HEK293 (cell line): ENCODE measurements at regions of chr15 and their contacts with region 1.

Region 1: DNA sequence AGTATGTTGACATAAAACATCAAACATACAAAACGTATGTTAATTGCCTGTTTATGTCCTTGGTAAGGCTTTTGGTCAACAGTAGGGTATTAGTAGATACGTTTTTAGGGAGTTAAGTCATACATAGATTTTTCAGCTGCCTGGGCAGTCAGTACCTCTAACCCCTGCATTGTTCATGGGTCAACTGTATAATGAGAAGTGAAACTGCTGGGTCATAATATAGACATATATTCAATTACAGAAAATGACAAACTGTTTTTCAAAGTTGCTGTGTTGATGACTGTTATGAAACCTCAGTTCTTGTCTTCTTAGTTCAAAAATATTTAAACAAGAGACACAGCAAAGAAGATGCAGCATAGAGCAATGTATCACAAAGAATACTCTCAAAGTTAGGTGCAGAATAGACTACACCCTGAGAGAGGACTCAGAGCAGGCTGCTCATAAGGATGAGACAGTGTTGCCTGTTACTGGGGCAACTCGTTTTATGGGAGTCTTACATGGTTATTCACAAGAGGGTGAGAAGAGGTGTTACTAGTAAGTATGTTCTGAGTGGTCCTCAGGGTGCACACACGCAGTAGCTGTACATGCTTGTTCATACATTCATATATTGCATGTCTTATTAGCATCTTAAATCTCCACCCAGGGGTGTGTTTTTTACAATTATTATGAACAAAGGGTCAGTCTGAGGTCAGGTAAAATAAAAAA is 53.1 kb upstream of the ADAMTS17 start:
- H3K4me3 ChIP-seq: no peak overlapping the region
- H3K27ac ChIP-seq: no peak overlapping the region
- H3K4me1 ChIP-seq: no peaks in the 10 kb centered on the region
- CTCF ChIP-seq: no peak

Region 2: GRCh38 chr15:100429116-100429728 is 34.3 kb after region 1 on chr15:
- CTCF ChIA-PET with region 1: no interaction called
- POLR2A ChIA-PET with region 1: interaction called, 11 read pairs
- H3K4me3 ChIP-seq: no peak overlapping the region
- H3K27ac ChIP-seq: no peak overlapping the region
- H3K4me1 ChIP-seq: no peaks in the 10 kb centered on the region
- CTCF ChIP-seq: no peak